WTC11 (cell line): ENCODE measurements at regions of chr5 and their contacts with region 1.

Region 1: GRCh38 chr5:137833463-137833862 is 34.2 kb upstream of the MYOT start:
- DNase-seq: no peak
- ATAC-seq: peak; percentile 62
- H3K4me3 Mint-ChIP-seq: no peak overlapping the region
- H3K27ac Mint-ChIP-seq: no peak overlapping the region
- H3K4me1 Mint-ChIP-seq: peaks cover 23% of the 10 kb centered on the region
- H3K27me3 Mint-ChIP-seq: no peaks in the 10 kb centered on the region
- CTCF ChIP-seq: no peak

Region 2: GRCh38 chr5:137714946-137715345 is 118.5 kb before region 1 on chr5:
- CTCF ChIA-PET with region 1: no interaction called
- POLR2A ChIA-PET with region 1: no interaction called
- DNase-seq: no peak
- ATAC-seq: no peak
- H3K4me3 Mint-ChIP-seq: no peak overlapping the region
- H3K27ac Mint-ChIP-seq: no peak overlapping the region
- H3K4me1 Mint-ChIP-seq: no peaks in the 10 kb centered on the region
- H3K27me3 Mint-ChIP-seq: no peaks in the 10 kb centered on the region
- CTCF ChIP-seq: no peak

Region 3: GRCh38 chr5:137822158-137822764 is 11.2 kb before region 1 on chr5:
- CTCF ChIA-PET with region 1: interaction called, 18 read pairs
- POLR2A ChIA-PET with region 1: no interaction called
- DNase-seq: peak; percentile 63
- ATAC-seq: peak; percentile 92
- H3K4me3 Mint-ChIP-seq: no peak overlapping the region
- H3K27ac Mint-ChIP-seq: no peak overlapping the region
- H3K4me1 Mint-ChIP-seq: peaks cover 19% of the 10 kb centered on the region
- H3K27me3 Mint-ChIP-seq: no peaks in the 10 kb centered on the region
- CTCF ChIP-seq: no peak